Right cardiac atrium (tissue), 5 donors: ENCODE measurements at regions of chr6 and their contacts with region 1.

Region 1: DNA sequence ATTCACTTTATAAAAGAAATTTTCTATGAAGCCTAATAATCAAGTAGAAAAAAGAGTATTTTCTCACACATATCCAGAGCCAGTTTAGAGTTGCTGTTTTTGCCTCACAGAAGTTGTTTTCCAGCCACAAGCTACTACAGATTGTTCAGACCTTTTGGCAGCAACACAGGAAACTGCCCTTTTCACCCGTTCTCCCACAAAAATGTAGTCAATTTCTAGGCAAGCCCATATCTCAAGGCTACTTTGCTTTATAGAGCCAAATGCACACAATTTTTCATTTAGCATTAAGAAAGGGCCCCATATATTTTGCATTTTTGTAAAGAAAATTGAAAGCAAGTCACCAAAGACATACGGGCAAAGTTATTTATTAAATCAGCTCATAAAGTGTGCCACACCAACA is 49.5 kb downstream of the EPB41L2 start:
- DNase-seq: peak in 1 of 3 donors; percentile 54
- ATAC-seq: peak; percentile 74 to 80
- H3K4me3 ChIP-seq: peak overlapping the region; percentile 39
- H3K27ac ChIP-seq: peak overlapping the region; percentile 35
- H3K4me1 ChIP-seq: peaks cover 3% of the 10 kb centered on the region
- H3K27me3 ChIP-seq: no peaks in the 10 kb centered on the region

Region 2: DNA sequence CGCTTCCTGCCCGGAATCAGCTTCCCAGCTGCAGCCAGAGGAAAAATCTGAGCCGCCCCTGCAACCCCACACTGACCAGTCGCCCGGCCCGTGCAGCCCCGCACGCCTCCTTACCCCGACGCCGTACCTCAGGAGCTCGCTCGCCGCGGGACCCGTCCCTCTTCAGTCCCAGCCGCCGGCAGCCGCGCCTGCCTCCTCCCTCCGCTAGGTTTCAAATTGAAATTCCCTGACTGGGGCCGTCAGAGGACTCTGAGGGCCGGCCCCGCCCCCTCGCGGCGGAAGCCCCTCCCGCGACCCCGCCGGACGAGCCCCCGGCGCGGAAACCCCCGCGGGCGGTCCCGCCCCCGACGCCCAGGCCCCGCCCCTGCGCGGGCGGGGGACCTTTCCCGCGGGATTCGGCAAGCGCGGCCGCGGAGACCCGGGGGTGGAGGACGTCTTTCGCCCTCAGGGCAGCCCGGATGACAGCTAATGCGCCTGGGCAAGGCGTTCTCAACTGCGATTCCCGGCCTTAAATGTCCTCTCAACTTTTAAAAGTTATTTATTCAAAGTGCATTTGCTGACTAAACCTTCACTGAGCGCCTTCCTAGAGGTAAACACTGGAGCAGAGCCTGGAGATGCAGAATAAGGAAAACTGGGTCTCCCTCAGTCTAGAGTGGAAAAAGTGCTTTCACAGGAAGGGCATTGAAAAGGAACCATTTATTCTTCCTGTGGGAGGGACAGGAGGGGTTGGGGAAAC is 49.7 kb after region 1 on chr6 and contains the start of gene EPB41L2:
- intact Hi-C with region 1: loop called in 1 of 4 experiments (anchors 5 kb)
- DNase-seq: peak; percentile 90 to 97 (median 96)
- ATAC-seq: peak; percentile 98 to 99
- H3K4me3 ChIP-seq: peak within 1 kb of the TSS; percentile 92
- H3K27ac ChIP-seq: peak within 1 kb of the TSS; percentile 73
- H3K4me1 ChIP-seq: no peaks in the 10 kb centered on the region
- H3K27me3 ChIP-seq: no peaks in the 10 kb centered on the region
- total RNA-seq, gene EPB41L2: 95.3 to 120 (median 107) TPM